OCI-LY7 (cell line): ENCODE measurements at regions of chr18 and their contacts with region 1.

Region 1: GRCh38 chr18:21111341-21112139 is at the start of gene ROCK1:
- DNase-seq: peak; percentile 95
- H3K4me3 ChIP-seq: peak within 1 kb of the TSS; percentile 90
- H3K27ac ChIP-seq: peak within 1 kb of the TSS; percentile 89
- H3K4me1 ChIP-seq: peaks cover 30% of the 10 kb centered on the region
- CTCF ChIP-seq: no peak
- total RNA-seq, gene ROCK1: 43.2 and 48.5 TPM in 2 replicates

Region 2: GRCh38 chr18:20988726-20989125 is 122.8 kb before region 1 on chr18:
- CTCF ChIA-PET with region 1: no interaction called
- POLR2A ChIA-PET with region 1: no interaction called
- intact Hi-C with region 1: no loop called
- DNase-seq: no peak
- H3K4me3 ChIP-seq: no peak overlapping the region
- H3K27ac ChIP-seq: no peak overlapping the region
- H3K4me1 ChIP-seq: no peaks in the 10 kb centered on the region
- CTCF ChIP-seq: no peak

Region 3: DNA sequence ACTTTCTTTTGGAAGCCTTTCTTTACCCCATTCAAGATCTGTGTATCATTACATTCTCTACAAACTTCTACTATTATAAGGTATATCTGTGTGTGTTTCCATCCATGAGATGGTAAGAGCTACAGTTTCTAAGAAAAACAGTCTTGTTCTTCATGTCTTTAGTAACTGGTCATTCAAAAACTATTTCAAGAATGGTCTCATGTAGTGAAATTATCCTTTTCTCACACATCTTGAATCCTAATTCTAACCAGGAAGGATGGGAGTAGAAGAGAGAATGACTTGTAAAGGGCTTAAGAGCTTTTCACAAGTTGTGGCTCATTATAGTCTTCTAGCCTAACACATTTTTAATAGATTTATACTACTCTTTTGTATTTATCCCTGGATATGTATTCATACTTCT is 47.2 kb before region 1 on chr18:
- CTCF ChIA-PET with region 1: no interaction called
- POLR2A ChIA-PET with region 1: no interaction called
- intact Hi-C with region 1: no loop called
- DNase-seq: no peak
- H3K4me3 ChIP-seq: no peak overlapping the region
- H3K27ac ChIP-seq: no peak overlapping the region
- H3K4me1 ChIP-seq: no peaks in the 10 kb centered on the region
- CTCF ChIP-seq: no peak

Region 4: DNA sequence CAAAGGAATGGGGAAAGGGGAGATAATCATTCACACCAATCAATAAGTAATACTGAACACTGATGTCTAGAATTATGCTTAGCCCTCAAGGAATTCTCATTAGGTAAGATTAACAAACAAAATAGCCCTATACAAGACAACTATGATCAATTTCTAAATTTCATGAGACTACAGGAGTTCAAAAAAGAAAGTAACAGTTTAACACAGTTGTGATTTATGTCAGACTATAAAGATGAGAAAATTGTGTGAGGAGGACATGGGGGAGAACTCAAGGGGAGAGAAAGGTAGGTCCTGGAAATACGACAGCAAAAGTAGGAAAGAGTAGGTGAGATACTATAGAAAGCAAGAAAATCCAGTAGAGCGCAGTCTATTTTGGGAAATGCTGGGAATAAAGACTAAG is 14.8 kb before region 1 on chr18:
- CTCF ChIA-PET with region 1: no interaction called
- POLR2A ChIA-PET with region 1: interaction called, 12 read pairs
- intact Hi-C with region 1: no loop called
- DNase-seq: no peak
- H3K4me3 ChIP-seq: no peak overlapping the region
- H3K27ac ChIP-seq: no peak overlapping the region
- H3K4me1 ChIP-seq: peaks cover 43% of the 10 kb centered on the region
- CTCF ChIP-seq: no peak

Region 5: DNA sequence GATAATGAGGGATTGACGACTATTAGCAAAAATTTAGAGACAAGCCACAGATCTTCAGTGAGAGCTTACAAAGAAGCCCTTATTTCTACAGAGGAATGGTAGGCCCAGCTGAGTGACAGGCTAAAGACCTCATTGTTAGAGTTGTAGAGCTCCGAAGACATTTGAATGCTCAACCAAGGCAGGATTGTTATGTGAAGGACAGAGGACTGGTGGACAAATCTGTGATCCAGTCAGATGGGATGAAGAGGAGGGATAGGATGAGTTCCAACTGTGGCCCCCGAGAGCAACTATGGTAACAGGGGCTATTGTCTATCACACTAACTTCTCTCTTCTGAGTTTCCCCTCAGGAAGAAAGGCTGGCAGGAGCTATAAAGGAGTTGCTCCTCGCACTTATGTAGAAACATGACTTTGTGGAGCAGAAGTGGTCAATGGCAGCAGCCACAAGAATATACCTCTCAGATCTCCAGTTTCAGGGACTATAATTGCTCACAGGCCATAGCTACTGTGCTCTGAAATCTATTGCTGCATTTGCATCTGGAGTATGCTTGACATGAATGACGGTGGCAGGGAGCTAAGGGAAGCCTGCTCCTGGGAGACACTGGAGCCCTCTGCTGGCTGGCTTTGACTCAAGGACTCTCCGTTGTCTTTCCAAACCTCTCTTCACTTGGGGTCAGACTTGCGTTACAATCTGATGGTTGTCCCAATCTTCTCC is 80.2 kb after region 1 on chr18:
- CTCF ChIA-PET with region 1: no interaction called
- POLR2A ChIA-PET with region 1: no interaction called
- intact Hi-C with region 1: no loop called
- DNase-seq: peak; percentile 30
- H3K4me3 ChIP-seq: no peak overlapping the region
- H3K27ac ChIP-seq: no peak overlapping the region
- H3K4me1 ChIP-seq: no peaks in the 10 kb centered on the region
- CTCF ChIP-seq: peak; percentile 77